WTC11 (cell line): ENCODE measurements at regions of chr16 and their contacts with region 1.

Region 1: GRCh38 chr16:75110637-75111513 is 5.7 kb downstream of the LDHD start:
- DNase-seq: peak; percentile 90
- ATAC-seq: peak; percentile 72
- H3K4me3 Mint-ChIP-seq: peak overlapping the region; percentile 27
- H3K27ac Mint-ChIP-seq: peak overlapping the region; percentile 38
- H3K4me1 Mint-ChIP-seq: peaks cover 53% of the 10 kb centered on the region
- H3K27me3 Mint-ChIP-seq: no peaks in the 10 kb centered on the region
- CTCF ChIP-seq: peak; percentile 80

Region 2: DNA sequence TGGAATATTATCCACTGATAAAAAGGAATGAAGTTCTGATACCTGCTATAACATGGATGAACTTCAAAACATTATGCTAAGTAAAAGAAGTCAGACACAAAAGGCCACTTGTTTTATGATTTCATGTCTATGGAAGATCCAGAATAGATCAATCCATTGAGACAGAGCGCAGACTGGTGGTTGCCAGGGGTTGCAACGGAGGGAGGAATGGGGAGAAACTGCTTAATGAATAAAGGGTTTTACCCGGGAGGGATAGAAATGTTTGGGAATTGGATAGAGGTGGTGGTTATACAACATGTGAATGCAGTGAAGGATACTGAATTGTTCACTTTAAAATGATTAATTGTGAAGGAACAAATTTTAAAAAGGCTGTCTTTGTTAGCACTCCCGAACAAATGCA is 156.1 kb before region 1 on chr16:
- CTCF ChIA-PET with region 1: interaction called, 10 read pairs
- POLR2A ChIA-PET with region 1: no interaction called
- DNase-seq: no peak
- ATAC-seq: no peak
- H3K4me3 Mint-ChIP-seq: no peak overlapping the region
- H3K27ac Mint-ChIP-seq: no peak overlapping the region
- H3K4me1 Mint-ChIP-seq: peaks cover 20% of the 10 kb centered on the region
- H3K27me3 Mint-ChIP-seq: no peaks in the 10 kb centered on the region
- CTCF ChIP-seq: no peak

Region 3: DNA sequence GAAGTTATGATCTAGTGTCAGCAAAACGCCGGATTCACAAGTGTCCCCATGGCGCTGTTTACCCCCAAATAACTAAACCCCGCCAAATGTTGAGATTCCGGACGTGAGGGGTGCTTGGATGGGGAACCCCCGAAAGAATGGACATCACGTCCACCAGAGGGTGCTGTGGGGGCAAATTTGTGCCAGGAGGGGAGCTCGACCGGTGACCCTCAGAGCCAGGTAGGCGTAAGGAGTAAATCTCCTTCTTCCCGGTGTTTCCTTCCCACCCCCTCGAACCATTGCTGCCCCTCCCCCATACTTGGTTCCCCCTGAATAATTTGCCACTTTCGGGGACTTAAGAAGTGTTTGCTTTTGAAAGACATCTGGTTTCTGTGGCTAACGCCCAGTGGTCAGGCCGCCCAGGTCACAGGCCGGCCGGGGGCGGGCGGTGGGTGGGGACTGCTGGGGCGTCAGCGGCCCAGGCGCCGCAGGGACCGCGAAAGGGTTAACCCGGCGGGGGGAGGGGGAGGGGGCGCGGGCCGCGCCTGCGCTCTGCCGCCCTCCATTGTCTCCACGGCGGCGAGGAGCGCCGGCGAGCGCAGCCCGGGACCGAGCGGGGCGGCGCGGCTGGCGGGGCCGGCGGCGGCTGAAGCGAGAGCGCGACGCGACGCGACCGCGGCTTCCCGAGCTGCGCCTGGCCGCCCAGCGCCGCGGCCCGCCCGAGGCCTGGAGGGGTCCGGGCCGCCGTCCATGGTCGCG is 112.2 kb before region 1 on chr16 and contains the start of gene ZNRF1:
- CTCF ChIA-PET with region 1: interaction called, 158 read pairs
- POLR2A ChIA-PET with region 1: interaction called, 16 read pairs
- DNase-seq: peak; percentile 91
- ATAC-seq: peak; percentile 74
- H3K4me3 Mint-ChIP-seq: peak within 1 kb of the TSS; percentile 85
- H3K27ac Mint-ChIP-seq: peak within 1 kb of the TSS; percentile 59
- H3K4me1 Mint-ChIP-seq: peaks cover 45% of the 10 kb centered on the region
- H3K27me3 Mint-ChIP-seq: peaks cover 5% of the 10 kb centered on the region
- CTCF ChIP-seq: peak; percentile 51; the same call in 1 of the 2 replicates
- total RNA-seq, gene ZNRF1: 44.3 to 47.6 TPM (median 46.5 TPM) in 3 replicates

Region 4: DNA sequence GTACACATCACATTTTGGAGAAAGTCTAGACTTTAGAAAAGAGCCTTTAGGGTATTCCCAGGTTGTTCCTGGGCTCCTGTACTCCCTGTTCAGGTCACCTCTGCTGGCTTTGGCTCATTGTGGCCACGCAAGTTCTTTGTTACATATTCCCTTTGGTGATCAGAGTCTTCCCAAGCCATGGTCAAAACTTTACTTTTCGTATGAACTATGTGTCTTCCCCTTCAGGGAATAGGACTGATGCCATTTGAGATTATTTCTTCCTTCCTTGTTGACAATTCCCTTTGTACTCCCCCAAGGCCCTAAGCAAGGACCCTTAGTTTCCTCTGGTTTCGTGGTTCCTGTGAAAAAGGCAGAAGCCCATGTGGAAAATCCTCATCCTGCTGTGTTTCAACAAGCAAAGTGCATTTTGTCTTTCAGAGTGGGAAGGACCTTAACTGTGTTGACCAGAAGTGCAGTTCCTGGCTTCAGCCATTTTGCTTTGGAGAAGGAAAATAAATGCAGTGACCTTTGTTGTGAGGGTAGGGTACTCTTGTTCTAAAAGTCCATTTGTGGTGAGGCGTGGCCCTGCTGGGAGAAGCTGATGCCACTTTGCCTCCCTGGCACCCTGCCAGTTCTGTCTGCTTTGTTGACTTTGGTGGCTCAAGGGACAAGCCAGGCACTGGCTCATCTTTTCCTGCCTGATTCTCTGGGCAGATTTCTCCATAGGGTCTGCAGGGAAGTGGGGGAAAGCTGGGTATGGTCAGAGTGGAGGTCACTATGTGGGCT is 56.9 kb before region 1 on chr16:
- CTCF ChIA-PET with region 1: interaction called, 15 read pairs
- POLR2A ChIA-PET with region 1: no interaction called
- DNase-seq: no peak
- ATAC-seq: no peak
- H3K4me3 Mint-ChIP-seq: no peak overlapping the region
- H3K27ac Mint-ChIP-seq: no peak overlapping the region
- H3K4me1 Mint-ChIP-seq: peaks cover 35% of the 10 kb centered on the region
- H3K27me3 Mint-ChIP-seq: no peaks in the 10 kb centered on the region
- CTCF ChIP-seq: no peak

Region 5: GRCh38 chr16:75080205-75081029 is 30.5 kb before region 1 on chr16:
- CTCF ChIA-PET with region 1: interaction called, 11 read pairs
- POLR2A ChIA-PET with region 1: no interaction called
- DNase-seq: no peak
- ATAC-seq: peak; percentile 62
- H3K4me3 Mint-ChIP-seq: peak overlapping the region; percentile 16; the same call in 1 of the 2 replicates
- H3K27ac Mint-ChIP-seq: no peak overlapping the region
- H3K4me1 Mint-ChIP-seq: peaks cover 19% of the 10 kb centered on the region
- H3K27me3 Mint-ChIP-seq: no peaks in the 10 kb centered on the region
- CTCF ChIP-seq: no peak

Region 6: DNA sequence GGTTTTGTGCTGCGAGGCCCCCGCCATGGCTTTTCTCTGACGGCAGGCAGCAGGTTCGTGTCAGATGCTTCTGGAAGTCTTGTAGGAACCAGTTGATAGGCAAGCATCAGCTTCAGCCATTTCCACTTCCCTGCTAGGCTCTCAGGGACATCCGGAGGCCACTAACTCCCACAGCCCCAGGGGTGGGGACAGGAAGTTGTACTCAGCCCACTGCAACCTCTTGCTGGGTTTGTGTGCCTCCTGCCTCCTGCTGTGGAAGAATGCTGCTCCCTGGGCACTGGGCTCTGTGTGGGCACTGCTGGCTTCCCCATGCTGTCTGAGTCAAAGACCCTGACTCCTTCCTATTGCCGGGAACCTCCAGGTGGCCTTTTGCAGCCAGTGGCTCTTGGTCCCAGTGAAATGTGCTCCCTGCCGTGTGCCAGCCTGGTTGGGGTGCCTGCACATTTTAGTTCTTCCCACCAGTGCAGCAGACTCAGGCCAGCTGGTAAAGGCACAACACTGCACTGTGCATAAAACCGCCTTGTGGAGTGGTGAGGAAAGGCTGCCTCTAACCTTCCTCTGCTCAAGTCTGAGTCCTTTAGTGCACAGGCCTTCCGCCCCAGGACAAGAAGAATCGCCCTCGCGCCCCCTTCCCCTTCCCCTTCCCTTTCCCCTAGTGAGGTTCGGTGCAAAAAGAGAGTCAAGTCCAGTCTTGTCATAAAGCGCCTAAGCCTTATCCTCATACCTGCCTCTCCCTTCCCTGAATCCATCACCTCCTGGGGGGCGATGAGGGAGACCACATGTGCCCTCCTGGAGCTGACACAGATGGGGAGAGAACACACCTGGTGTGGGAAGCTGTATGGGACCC is 10.9 kb before region 1 on chr16:
- CTCF ChIA-PET with region 1: interaction called, 135 read pairs
- POLR2A ChIA-PET with region 1: interaction called, 3 read pairs
- DNase-seq: no peak
- ATAC-seq: peak; percentile 8
- H3K4me3 Mint-ChIP-seq: no peak overlapping the region
- H3K27ac Mint-ChIP-seq: peak overlapping the region; percentile 81
- H3K4me1 Mint-ChIP-seq: peaks cover 60% of the 10 kb centered on the region
- H3K27me3 Mint-ChIP-seq: no peaks in the 10 kb centered on the region
- CTCF ChIP-seq: no peak